Natural killer cell (primary cell): ENCODE measurements at regions of chr3 and their contacts with region 1.

Region 1: DNA sequence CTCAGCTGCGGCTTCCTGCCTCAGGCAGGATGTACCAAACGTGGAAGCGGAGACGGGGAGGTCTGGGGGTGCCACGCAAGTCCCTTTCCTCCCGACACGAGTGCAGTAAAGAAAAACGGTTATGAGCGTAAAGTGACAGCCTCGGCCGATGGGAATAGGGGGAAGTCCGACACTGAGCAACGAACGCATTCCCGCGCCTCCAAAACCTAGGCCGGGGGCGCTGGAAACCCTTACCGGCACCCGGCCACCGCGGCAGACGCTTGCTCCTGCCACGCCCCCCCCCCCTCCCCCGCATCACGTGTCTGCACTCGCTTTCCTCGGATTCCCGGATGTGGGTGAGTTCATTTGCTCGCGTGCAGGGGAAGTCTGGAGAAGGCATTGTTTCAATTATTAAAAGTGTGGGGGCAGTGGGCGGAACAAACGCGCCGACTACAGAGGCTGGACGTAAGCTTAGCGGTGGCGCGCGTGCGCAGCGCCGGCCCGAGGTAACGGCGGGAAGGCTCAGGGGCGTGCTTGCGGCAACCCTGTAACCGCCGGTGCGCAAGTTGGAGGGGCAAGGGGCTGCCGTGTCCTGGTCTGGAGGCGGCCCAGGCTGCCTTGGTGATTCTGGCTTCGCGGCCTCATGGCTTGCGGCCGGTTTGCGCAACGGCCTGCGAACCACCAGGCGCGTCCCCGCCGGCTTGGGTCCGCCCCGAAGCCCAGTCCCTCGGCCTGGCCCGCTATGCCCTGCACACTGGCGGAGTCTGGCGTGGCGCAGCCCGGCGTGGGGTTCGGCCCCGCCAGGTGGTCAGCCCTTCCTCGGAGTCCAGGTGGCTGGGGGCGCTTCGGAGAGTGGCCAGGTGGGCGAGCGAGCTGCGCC is at the starts of genes ANAPC13 and CEP63:
- DNase-seq: peak; percentile 91 to 98
- ATAC-seq: peak; percentile 79 to 92 (median 84)
- H3K4me3 ChIP-seq: peak within 1 kb of the TSS; percentile 86
- H3K4me3 Mint-ChIP-seq: peak within 1 kb of the TSS; percentile 99
- H3K27ac ChIP-seq: peak within 1 kb of the TSS; percentile 95
- H3K27ac Mint-ChIP-seq: peak within 1 kb of the TSS; percentile 98 to 99
- H3K4me1 ChIP-seq: peaks cover 23% of the 10 kb centered on the region
- H3K4me1 Mint-ChIP-seq: peaks cover 41 to 53% of the 10 kb centered on the region in 2 donors
- H3K27me3 ChIP-seq: no peaks in the 10 kb centered on the region
- H3K27me3 Mint-ChIP-seq: no peaks in the 10 kb centered on the region
- CTCF ChIP-seq: no peak
- total RNA-seq, gene ANAPC13: 16.1 to 20.4 (median 16.6) TPM
- total RNA-seq, gene CEP63: 17.9 to 25.7 (median 19.5) TPM

Region 2: DNA sequence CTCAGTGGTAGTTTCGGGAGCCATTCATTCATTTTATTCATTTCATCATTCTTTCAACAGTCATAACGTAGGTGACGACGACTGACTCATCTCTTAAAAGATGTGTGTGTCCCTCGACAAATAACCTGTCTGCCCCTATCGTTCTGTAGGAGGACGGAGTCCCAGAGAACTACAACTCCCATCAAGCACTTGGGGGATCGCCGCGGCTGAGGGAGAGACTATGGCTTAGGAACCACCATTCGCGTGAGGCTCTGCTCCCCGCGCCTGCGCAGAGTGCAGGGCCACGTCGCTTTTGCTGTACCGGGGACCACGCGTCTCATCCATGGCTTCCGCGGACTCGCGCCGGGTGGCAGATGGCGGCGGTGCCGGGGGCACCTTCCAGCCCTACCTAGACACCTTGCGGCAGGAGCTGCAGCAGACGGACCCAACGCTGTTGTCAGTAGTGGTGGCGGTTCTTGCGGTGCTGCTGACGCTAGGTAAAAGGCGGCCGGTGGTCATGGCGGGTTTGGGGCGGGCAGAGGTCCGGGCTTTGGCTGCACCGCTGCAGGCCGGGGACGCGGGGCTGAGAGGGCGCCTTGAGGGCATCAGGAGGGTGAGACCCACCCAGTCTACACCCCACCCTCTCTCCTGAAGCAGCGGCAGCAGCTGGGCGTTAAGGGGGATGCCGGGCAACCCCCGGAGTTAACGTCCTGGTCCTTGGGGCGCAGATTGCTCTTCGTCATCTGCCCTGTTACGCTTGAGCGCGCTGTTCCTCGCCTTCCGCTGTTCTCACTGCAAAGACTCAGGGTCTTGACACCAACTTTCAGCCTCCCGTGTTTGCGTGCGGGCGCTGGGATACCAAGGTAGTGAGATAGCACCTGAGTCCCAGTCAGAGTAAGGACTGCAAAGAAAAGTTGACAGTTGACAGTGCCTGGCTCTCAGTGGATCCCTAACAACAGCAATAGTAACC is 680.1 kb before region 1 on chr3 and contains the start of gene SRPRB:
- intact Hi-C with region 1: loop called (anchors 5 kb)
- DNase-seq: peak; percentile 87 to 98
- ATAC-seq: peak; percentile 95 to 98 (median 97)
- H3K4me3 ChIP-seq: peak within 1 kb of the TSS; percentile 89
- H3K4me3 Mint-ChIP-seq: peak within 1 kb of the TSS; percentile 95
- H3K27ac ChIP-seq: peak within 1 kb of the TSS; percentile 76
- H3K27ac Mint-ChIP-seq: peak within 1 kb of the TSS; percentile 90 to 96
- H3K4me1 ChIP-seq: peaks cover 9% of the 10 kb centered on the region
- H3K4me1 Mint-ChIP-seq: peaks cover 15 to 17% of the 10 kb centered on the region in 2 donors
- H3K27me3 ChIP-seq: no peaks in the 10 kb centered on the region
- H3K27me3 Mint-ChIP-seq: peaks cover 18 to 25% of the 10 kb centered on the region in 2 donors
- CTCF ChIP-seq: no peak
- total RNA-seq, gene SRPRB: 19.8 to 26.4 (median 22.4) TPM